PC-9 (cell line): ENCODE measurements at regions of chr7 and their contacts with region 1.

Region 1: DNA sequence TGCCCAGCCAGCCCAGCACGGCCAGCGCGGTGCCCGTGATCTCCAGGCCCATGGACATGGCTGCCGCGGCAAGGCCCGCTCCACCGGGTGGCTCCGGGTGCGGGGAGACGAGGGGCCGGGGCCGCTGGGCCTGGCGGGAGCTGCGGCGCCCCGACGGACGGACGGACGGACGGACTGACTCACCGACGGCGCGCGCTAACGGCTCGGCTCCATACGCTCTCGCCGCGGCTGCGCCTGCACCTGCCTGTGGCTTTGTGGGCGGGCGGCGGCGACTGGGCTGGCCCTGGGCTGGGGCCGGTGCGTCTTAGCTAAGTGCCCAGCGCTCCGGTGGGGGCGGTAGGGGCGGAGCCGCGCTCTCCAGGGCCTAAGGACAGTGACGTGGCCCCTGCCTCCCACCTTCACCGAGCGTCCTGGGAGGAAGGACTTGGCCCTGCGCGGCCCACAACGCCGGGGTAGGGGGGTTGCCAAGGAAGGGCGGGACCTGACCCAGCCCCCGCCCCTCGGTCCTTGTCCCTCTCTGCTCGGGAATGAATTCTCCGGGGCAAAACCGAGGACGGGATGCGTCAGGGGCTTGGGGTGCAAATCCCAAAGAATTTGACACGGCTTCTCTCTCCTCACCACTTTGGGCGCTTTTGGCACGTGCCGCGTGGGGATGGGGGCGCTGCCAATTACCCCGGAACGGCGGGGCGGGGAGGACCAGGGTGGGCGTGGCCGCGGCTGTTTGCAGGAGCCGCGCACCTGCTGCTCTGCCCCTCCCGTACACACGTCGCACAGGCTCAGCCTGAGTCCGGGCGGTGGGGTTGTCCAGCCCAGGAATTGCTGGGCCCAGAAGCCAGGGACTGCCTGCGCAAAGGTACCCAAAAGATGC is at the start of gene CLDN3:
- DNase-seq: peak; percentile 83 to 97
- H3K4me3 ChIP-seq: peak within 1 kb of the TSS; percentile 66; the same call in 1 of the 2 replicates
- H3K27ac ChIP-seq: peak within 1 kb of the TSS; percentile 58
- H3K4me1 ChIP-seq: peaks cover 23% of the 10 kb centered on the region
- H3K27me3 ChIP-seq: no peaks in the 10 kb centered on the region
- CTCF ChIP-seq: no peak
- total RNA-seq, gene CLDN3: 31.3 and 45.2 TPM in 2 replicates

Region 2: DNA sequence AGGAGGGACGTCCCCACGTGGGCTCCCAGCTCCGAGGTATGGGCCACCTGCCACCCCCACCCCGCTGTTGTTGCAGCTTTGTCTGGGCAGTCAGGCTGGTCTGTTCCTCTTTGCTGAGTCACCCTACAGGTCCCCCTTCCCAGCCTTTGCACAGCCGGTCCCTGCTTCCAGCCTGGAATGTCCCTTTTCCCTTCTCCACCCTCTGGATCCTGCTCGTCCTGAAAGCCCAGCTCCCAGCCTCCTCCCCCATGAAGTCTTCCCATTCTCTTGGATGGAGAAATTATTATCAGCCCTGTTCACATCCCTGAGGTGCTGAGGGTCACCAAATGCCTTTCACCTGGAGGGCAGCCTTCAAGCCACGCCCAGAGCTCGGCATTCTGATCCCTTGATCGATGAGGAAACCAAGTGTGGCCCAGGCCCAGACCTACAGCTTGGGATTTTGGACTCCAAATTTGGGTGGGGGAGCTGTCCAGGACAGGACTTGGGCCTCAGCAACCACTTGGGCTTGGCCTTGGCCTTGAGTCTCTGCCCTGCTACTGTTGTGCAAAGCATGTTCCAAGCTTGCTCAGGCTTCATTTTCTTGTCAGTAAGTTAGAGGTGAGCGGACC is 63.2 kb after region 1 on chr7:
- CTCF ChIA-PET with region 1: no interaction called
- POLR2A ChIA-PET with region 1: interaction called, 15 read pairs
- intact Hi-C with region 1: loop called (anchors 1 kb)
- DNase-seq: peak; percentile 80 to 85
- H3K4me3 ChIP-seq: peak overlapping the region; percentile 97; the same call in 1 of the 2 replicates
- H3K27ac ChIP-seq: peak overlapping the region; percentile 99
- H3K4me1 ChIP-seq: peaks cover 26% of the 10 kb centered on the region
- H3K27me3 ChIP-seq: no peaks in the 10 kb centered on the region
- CTCF ChIP-seq: no peak

Region 3: DNA sequence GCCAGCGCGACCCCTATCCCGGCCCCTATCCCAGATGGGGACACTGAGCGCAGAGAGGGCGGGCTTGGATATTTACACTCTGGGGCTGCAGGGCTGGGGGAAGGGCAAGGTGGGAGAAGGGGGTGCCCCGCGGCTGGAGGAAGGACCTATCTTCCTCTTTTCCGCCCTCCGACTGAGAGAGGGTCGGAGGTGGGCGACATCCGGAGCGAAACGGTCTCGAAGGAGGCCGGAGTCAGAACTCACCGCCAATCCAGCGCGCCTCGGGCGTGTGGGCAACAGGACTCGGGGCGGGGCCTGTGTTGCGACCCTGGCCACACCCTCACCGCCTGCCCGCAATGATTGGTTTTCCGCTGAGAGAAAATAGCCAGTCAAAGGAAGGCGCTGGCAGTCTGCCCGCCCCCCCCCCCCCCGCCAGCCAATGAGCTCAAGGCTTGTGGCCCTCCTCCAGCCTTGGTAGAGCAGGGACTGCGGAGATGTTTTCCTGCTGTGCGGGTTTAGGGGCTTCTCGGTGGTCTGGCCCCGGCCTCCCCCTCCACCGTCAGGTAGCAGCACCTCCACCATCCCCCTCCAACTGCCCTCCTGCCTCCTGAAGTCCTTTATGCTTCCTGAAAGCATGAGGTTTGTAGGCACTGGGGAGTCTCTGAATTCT is 72.1 kb after region 1 on chr7 and contains the start of gene METTL27:
- CTCF ChIA-PET with region 1: no interaction called
- POLR2A ChIA-PET with region 1: interaction called, 18 read pairs
- intact Hi-C with region 1: no loop called
- DNase-seq: peak; percentile 79 to 97
- H3K4me3 ChIP-seq: peak within 1 kb of the TSS; percentile 84
- H3K27ac ChIP-seq: peak within 1 kb of the TSS; percentile 59
- H3K4me1 ChIP-seq: peaks cover 20% of the 10 kb centered on the region
- H3K27me3 ChIP-seq: no peaks in the 10 kb centered on the region
- CTCF ChIP-seq: no peak
- total RNA-seq, gene METTL27: 23.2 and 34.7 TPM in 2 replicates